CD8-positive, alpha-beta T cell (primary cell): ENCODE measurements at regions of chr2 and their contacts with region 1.

Region 1: GRCh38 chr2:113203901-113204519 is 30.2 kb downstream of the PSD4 start:
- DNase-seq: peak; percentile 60 to 87 (median 77)
- ATAC-seq: peak; percentile 95
- H3K4me3 ChIP-seq: no peak overlapping the region
- H3K4me3 Mint-ChIP-seq: peak overlapping the region; percentile 55
- H3K27ac ChIP-seq: peak overlapping the region in 1 of 2 experiments; percentile 54
- H3K27ac Mint-ChIP-seq: peak overlapping the region; percentile 88
- H3K4me1 ChIP-seq: peaks cover 8% of the 10 kb centered on the region
- H3K4me1 Mint-ChIP-seq: peaks cover 21% of the 10 kb centered on the region
- H3K27me3 ChIP-seq: no peaks in the 10 kb centered on the region
- H3K27me3 Mint-ChIP-seq: no peaks in the 10 kb centered on the region
- CTCF ChIP-seq: peak; percentile 71

Region 2: GRCh38 chr2:113060396-113060795 is 143.6 kb before region 1 on chr2:
- CTCF ChIA-PET with region 1: no interaction called
- POLR2A ChIA-PET with region 1: no interaction called
- intact Hi-C with region 1: no loop called
- DNase-seq: no peak
- ATAC-seq: no peak
- H3K4me3 ChIP-seq: no peak overlapping the region
- H3K4me3 Mint-ChIP-seq: no peak overlapping the region
- H3K27ac ChIP-seq: no peak overlapping the region
- H3K27ac Mint-ChIP-seq: no peak overlapping the region
- H3K4me1 ChIP-seq: no peaks in the 10 kb centered on the region
- H3K4me1 Mint-ChIP-seq: no peaks in the 10 kb centered on the region
- H3K27me3 ChIP-seq: no peaks in the 10 kb centered on the region
- H3K27me3 Mint-ChIP-seq: peaks cover 3% of the 10 kb centered on the region
- CTCF ChIP-seq: no peak

Region 3: GRCh38 chr2:113173542-113174395 is 30.2 kb before region 1 on chr2 and contains the start of gene PSD4:
- CTCF ChIA-PET with region 1: interaction called, 95 read pairs
- POLR2A ChIA-PET with region 1: interaction called, 8 read pairs
- intact Hi-C with region 1: loop called (anchors 2 kb)
- DNase-seq: peak; percentile 70 to 95 (median 89)
- ATAC-seq: peak; percentile 75
- H3K4me3 ChIP-seq: peak within 1 kb of the TSS; percentile 73 to 91
- H3K4me3 Mint-ChIP-seq: peak within 1 kb of the TSS; percentile 87
- H3K27ac ChIP-seq: peak within 1 kb of the TSS; percentile 77 to 82
- H3K27ac Mint-ChIP-seq: peak within 1 kb of the TSS; percentile 95
- H3K4me1 ChIP-seq: peaks cover 76% of the 10 kb centered on the region
- H3K4me1 Mint-ChIP-seq: peaks cover 82% of the 10 kb centered on the region
- H3K27me3 ChIP-seq: no peaks in the 10 kb centered on the region
- H3K27me3 Mint-ChIP-seq: no peaks in the 10 kb centered on the region
- CTCF ChIP-seq: no peak
- total RNA-seq, gene PSD4: 80.6 to 86.2 TPM

Region 4: GRCh38 chr2:113192438-113193100 is 11.4 kb before region 1 on chr2:
- CTCF ChIA-PET with region 1: interaction called, 26 read pairs
- POLR2A ChIA-PET with region 1: no interaction called
- intact Hi-C with region 1: no loop called
- DNase-seq: no peak
- ATAC-seq: no peak
- H3K4me3 ChIP-seq: no peak overlapping the region
- H3K4me3 Mint-ChIP-seq: no peak overlapping the region
- H3K27ac ChIP-seq: no peak overlapping the region
- H3K27ac Mint-ChIP-seq: peak overlapping the region; percentile 76
- H3K4me1 ChIP-seq: peaks cover 10% of the 10 kb centered on the region
- H3K4me1 Mint-ChIP-seq: peaks cover 52% of the 10 kb centered on the region
- H3K27me3 ChIP-seq: no peaks in the 10 kb centered on the region
- H3K27me3 Mint-ChIP-seq: no peaks in the 10 kb centered on the region
- CTCF ChIP-seq: no peak

Region 5: DNA sequence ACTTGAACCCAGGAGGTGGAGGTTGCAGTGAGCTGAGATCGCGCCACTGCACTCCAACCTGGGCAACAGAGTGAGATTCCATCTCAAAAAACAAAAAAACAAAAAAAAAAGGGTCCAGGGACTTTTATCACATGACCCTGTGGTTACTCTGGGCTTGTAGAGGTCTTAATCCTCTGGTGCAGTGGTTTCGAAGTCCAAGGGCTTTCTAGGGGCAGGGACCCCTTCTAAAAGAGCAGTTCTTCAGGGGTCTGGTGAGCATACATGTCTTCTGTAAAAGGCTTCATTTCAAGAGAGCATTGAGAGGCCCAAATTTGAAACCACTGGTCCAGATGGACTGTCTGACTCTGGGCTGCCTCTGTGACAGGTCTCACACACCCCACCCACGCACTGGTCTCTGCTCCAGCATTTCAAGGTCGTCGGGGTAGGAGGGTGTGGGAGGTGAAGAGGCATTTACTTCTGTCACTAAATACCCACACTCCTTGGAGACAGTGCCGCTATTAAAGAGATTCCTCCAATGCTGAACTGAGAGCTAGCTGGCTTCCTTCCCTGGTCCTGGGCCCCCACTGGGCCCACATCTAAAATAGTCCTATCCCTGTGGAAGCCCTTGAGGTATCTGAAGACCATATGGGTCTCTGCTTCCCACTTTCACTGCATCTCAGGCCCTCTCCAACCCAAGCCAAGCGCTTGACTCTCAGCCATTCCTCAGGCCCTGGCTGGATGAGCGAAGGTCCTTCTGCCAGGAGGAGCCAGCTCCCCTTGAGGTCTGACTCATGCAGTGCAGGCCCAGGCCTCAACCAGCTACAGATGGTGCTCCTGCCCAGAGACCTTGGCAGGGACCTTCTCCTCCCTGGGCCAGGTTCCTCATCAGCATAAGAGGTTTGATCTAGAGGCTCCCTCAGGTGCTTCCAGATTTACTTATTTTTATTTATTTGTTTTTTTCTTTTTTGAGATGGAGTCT is 29.9 kb after region 1 on chr2:
- CTCF ChIA-PET with region 1: interaction called, 13 read pairs
- POLR2A ChIA-PET with region 1: no interaction called
- intact Hi-C with region 1: no loop called
- DNase-seq: no peak
- ATAC-seq: no peak
- H3K4me3 ChIP-seq: no peak overlapping the region
- H3K4me3 Mint-ChIP-seq: no peak overlapping the region
- H3K27ac ChIP-seq: no peak overlapping the region
- H3K27ac Mint-ChIP-seq: no peak overlapping the region
- H3K4me1 ChIP-seq: no peaks in the 10 kb centered on the region
- H3K4me1 Mint-ChIP-seq: peaks cover 4% of the 10 kb centered on the region
- H3K27me3 ChIP-seq: no peaks in the 10 kb centered on the region
- H3K27me3 Mint-ChIP-seq: no peaks in the 10 kb centered on the region
- CTCF ChIP-seq: no peak

Region 6: GRCh38 chr2:113370478-113371091 is 166.6 kb after region 1 on chr2:
- CTCF ChIA-PET with region 1: interaction called, 52 read pairs
- POLR2A ChIA-PET with region 1: no interaction called
- intact Hi-C with region 1: loop called (anchors 1 kb)
- DNase-seq: peak; percentile 29 to 83 (median 65)
- ATAC-seq: peak; percentile 94
- H3K4me3 ChIP-seq: no peak overlapping the region
- H3K4me3 Mint-ChIP-seq: no peak overlapping the region
- H3K27ac ChIP-seq: no peak overlapping the region
- H3K27ac Mint-ChIP-seq: no peak overlapping the region
- H3K4me1 ChIP-seq: peaks cover 4% of the 10 kb centered on the region
- H3K4me1 Mint-ChIP-seq: peaks cover 5% of the 10 kb centered on the region
- H3K27me3 ChIP-seq: no peaks in the 10 kb centered on the region
- H3K27me3 Mint-ChIP-seq: peaks cover 3% of the 10 kb centered on the region
- CTCF ChIP-seq: peak; percentile 61